ENCODE measurements at regions of chr17 and their contacts with region 1.

Region 1: GRCh38 chr17:6666077-6666521 is 14.5 kb downstream of the C17orf100 start:
- DNase-seq: peak; percentile 66 to 72
- H3K4me3 ChIP-seq: no peak overlapping the region
- H3K27ac ChIP-seq: no peak overlapping the region
- H3K4me1 ChIP-seq: peaks cover 0 to 2% (median 1%) of the 10 kb centered on the region in 4 experiments; a peak in 1 of 7 replicates
- H3K27me3 ChIP-seq: peaks cover 0 to 6% (median 4%) of the 10 kb centered on the region in 4 experiments; a peak in 2 of 7 replicates
- CTCF ChIP-seq: peak; percentile 85 to 97 (median 97)
- EP300 ChIP-seq: no peak
- POLR2A ChIP-seq: no peak
- RAD21 ChIP-seq: peak; percentile 98 to 99

Region 2: GRCh38 chr17:6611231-6611630 is 54.9 kb before region 1 on chr17:
- CTCF ChIA-PET with region 1: no interaction called
- POLR2A ChIA-PET with region 1: no interaction called
- DNase-seq: no peak
- H3K4me3 ChIP-seq: no peak overlapping the region
- H3K27ac ChIP-seq: no peak overlapping the region
- H3K4me1 ChIP-seq: no peaks in the 10 kb centered on the region
- H3K27me3 ChIP-seq: no peaks in the 10 kb centered on the region
- CTCF ChIP-seq: no peak
- EP300 ChIP-seq: no peak
- POLR2A ChIP-seq: no peak
- RAD21 ChIP-seq: no peak

Region 3: GRCh38 chr17:6648181-6648580 is 17.9 kb before region 1 on chr17:
- CTCF ChIA-PET with region 1: no interaction called
- POLR2A ChIA-PET with region 1: no interaction called
- DNase-seq: no peak
- H3K4me3 ChIP-seq: no peak overlapping the region
- H3K27ac ChIP-seq: no peak overlapping the region
- H3K4me1 ChIP-seq: peaks cover 0 to 10% (median 3%) of the 10 kb centered on the region in 4 experiments; a peak in 5 of 7 replicates
- H3K27me3 ChIP-seq: peaks cover 0 to 5% (median 0%) of the 10 kb centered on the region in 4 experiments; a peak in 2 of 7 replicates
- CTCF ChIP-seq: peak in 2 of 3 experiments; percentile 48 to 49; a peak in 3 of 4 replicates
- EP300 ChIP-seq: no peak
- POLR2A ChIP-seq: no peak
- RAD21 ChIP-seq: peak; percentile 29 to 49; a peak in 3 of 4 replicates

Region 4: GRCh38 chr17:6677158-6677831 is 11.2 kb after region 1 on chr17:
- CTCF ChIA-PET with region 1: interaction called, 16 read pairs
- POLR2A ChIA-PET with region 1: no interaction called
- DNase-seq: no peak
- H3K4me3 ChIP-seq: no peak overlapping the region
- H3K27ac ChIP-seq: no peak overlapping the region
- H3K4me1 ChIP-seq: no peaks in the 10 kb centered on the region; a peak in 1 of 7 replicates
- H3K27me3 ChIP-seq: no peaks in the 10 kb centered on the region
- CTCF ChIP-seq: no peak
- EP300 ChIP-seq: no peak
- POLR2A ChIP-seq: no peak
- RAD21 ChIP-seq: no peak

Region 5: DNA sequence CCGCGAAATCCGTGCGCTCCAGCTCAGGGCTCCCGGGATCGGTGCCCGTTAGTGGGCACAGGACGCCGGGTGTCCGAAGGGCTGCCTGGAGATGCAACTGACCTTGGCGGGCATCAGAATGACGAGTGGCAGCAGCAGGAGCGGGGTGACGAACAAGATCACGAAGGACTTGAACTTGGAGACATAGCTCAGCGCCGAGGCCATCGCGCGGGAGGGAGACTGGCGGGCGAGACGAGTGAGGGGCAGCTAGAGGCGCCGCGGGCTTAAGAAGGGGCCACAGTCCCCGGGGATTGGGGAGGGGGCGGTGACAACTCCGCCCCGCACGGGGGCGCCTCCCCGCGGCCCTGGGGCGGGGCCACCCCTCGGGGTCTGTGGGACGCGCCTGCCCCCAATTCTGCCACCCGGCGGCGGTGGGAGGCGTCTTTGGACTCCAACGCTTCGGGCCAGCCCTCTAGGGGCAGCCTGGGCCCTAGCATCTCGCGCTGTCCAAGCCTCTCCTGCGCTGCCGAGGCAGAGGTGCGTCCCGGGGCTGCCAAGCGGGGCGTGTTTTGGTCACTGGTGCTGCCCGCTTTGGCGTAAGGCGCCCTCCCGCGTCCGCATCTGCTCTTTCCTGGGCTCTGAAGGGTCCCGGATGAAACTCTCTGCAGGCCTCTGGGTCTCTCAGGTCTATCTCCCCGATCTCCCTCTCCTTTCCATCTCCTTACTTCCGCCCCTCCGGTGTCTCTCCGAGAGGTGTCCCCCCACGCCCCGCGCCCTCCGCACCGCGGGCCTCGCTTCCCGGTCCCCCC is 47.2 kb after region 1 on chr17 and contains the start of gene SLC13A5:
- CTCF ChIA-PET with region 1: interaction called, 41 read pairs
- POLR2A ChIA-PET with region 1: no interaction called
- DNase-seq: peak; percentile 38 to 84
- H3K4me3 ChIP-seq: peak within 1 kb of the TSS; percentile 39 to 68 (median 60)
- H3K27ac ChIP-seq: no peak within 1 kb of the TSS
- H3K4me1 ChIP-seq: peaks cover 0 to 12% (median 9%) of the 10 kb centered on the region in 4 experiments; a peak in 6 of 7 replicates
- H3K27me3 ChIP-seq: peaks cover 9 to 38% (median 31%) of the 10 kb centered on the region in 4 experiments
- CTCF ChIP-seq: peak; percentile 47 to 96 (median 72)
- EP300 ChIP-seq: no peak
- POLR2A ChIP-seq: peak in 1 of 2 experiments; percentile 36; a peak in 1 of 3 replicates
- RAD21 ChIP-seq: peak in 1 of 2 experiments; percentile 52; a peak in 3 of 4 replicates
- total RNA-seq, gene SLC13A5: 1.8 and 2.6 TPM in 2 replicates

Region 6: GRCh38 chr17:6894206-6894528 is 228.1 kb after region 1 on chr17:
- CTCF ChIA-PET with region 1: interaction called, 18 read pairs
- POLR2A ChIA-PET with region 1: no interaction called
- DNase-seq: peak; percentile 34 to 90
- H3K4me3 ChIP-seq: peak overlapping the region; percentile 30 to 84 (median 64)
- H3K27ac ChIP-seq: no peak overlapping the region
- H3K4me1 ChIP-seq: peaks cover 0 to 5% (median 0%) of the 10 kb centered on the region in 4 experiments; a peak in 1 of 7 replicates
- H3K27me3 ChIP-seq: peaks cover 0 to 14% (median 8%) of the 10 kb centered on the region in 4 experiments; a peak in 5 of 7 replicates
- CTCF ChIP-seq: peak; percentile 89 to 98 (median 98)
- EP300 ChIP-seq: no peak; a peak in 1 of 3 replicates
- POLR2A ChIP-seq: no peak
- RAD21 ChIP-seq: peak; percentile 77 to 82